ENCODE measurements at regions of chr3 and their contacts with region 1.

Region 1: DNA sequence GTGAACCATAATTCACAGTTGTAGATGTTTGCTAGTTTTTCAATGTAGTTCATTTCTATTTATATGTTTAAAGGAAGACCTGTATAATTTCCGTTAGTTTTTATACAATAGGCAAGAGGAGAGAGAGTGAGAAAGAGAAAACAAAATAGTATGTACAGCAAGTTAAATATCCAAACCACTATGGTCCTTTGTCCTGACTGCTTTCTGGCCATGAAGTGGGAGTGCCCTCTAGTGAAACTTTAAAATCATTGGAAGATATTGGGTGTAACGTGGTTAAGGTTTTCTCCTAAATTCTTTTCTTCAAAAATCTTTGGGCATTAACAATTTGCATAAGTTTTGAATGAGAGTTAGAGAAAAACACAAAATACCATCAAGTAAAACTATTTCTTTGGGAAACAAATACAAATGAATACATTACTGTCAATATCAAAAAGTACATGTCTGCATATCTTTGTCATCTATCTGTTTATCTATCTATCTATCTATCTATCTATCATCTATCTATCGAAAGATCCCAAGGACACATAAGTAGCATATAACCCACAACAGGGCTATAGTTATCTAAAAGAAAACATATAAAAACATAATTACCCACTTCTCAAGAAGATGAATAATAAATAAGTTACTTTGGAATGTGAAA is 534.6 kb upstream of the ATP11B start:
- DNase-seq: no peak
- ATAC-seq: no peak
- H3K4me3 ChIP-seq: no peak overlapping the region
- H3K27ac ChIP-seq: no peak overlapping the region
- H3K4me1 ChIP-seq: no peaks in the 10 kb centered on the region
- H3K27me3 ChIP-seq: peaks cover 0 to 4% (median 4%) of the 10 kb centered on the region in 3 donors
- CTCF ChIP-seq: peak in 1 of 5 experiments; percentile 29
- POLR2A ChIP-seq: no peak

Region 2: GRCh38 chr3:181709537-181710279 is 549.0 kb before region 1 on chr3:
- in situ Hi-C with region 1: loop called in 2 of 4 experiments (anchors 10 to 25 kb)
- intact Hi-C with region 1: loop called (anchors 2 kb)
- DNase-seq: peak in 1 of 2 donors; percentile 35
- ATAC-seq: peak; percentile 55 to 65
- H3K4me3 ChIP-seq: no peak overlapping the region
- H3K27ac ChIP-seq: no peak overlapping the region
- H3K4me1 ChIP-seq: peaks cover 0 to 13% of the 10 kb centered on the region in 2 donors
- H3K27me3 ChIP-seq: peaks cover 93 to 100% (median 96%) of the 10 kb centered on the region in 3 donors
- CTCF ChIP-seq: peak; percentile 56 to 84 (median 68)
- POLR2A ChIP-seq: no peak

Region 3: DNA sequence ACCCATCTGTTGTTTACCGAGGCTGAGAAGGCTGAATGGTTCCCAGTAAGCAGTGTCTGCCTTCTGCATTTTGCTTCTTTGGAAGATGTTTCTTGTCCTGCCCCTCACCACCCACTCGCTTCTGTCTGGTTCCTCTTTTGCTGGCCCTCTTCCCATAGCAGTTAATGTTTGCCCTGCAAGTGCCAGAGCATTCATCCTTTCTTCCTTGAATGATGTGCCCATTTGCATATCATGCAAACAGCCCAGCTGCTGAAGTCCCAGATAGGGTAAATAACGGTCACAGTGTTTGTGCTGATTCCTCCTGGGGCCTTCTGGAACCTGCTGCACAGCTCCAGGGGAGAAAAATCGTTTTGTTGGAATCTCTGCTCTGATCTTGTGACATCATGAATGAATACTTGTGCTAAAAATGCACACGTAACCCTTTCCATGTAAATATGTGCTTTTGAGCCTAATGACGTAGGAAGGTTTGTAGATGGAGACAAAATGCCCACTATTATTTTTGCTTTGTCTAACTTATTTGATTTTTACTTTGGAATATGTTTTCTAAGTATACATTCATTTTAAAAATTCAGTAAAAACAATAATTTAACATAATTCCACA is 165.9 kb before region 1 on chr3:
- in situ Hi-C with region 1: no loop called
- intact Hi-C with region 1: no loop called
- DNase-seq: no peak
- ATAC-seq: no peak
- H3K4me3 ChIP-seq: no peak overlapping the region
- H3K27ac ChIP-seq: no peak overlapping the region
- H3K4me1 ChIP-seq: no peaks in the 10 kb centered on the region
- H3K27me3 ChIP-seq: no peaks in the 10 kb centered on the region
- CTCF ChIP-seq: no peak
- POLR2A ChIP-seq: no peak